Right cardiac atrium (tissue), 5 donors: ENCODE measurements at regions of chr4 and their contacts with region 1.

Region 1: GRCh38 chr4:48635310-48635709 is 144.8 kb downstream of the FRYL start:
- DNase-seq: no peak
- ATAC-seq: peak in 1 of 2 donors; percentile 29
- H3K4me3 ChIP-seq: no peak overlapping the region
- H3K27ac ChIP-seq: no peak overlapping the region
- H3K4me1 ChIP-seq: no peaks in the 10 kb centered on the region
- H3K27me3 ChIP-seq: no peaks in the 10 kb centered on the region

Region 2: GRCh38 chr4:48673537-48673936 is 38.2 kb after region 1 on chr4:
- intact Hi-C with region 1: loop called in 1 of 4 experiments (anchors 5 kb)
- DNase-seq: no peak
- ATAC-seq: no peak
- H3K4me3 ChIP-seq: no peak overlapping the region
- H3K27ac ChIP-seq: no peak overlapping the region
- H3K4me1 ChIP-seq: peaks cover 3% of the 10 kb centered on the region
- H3K27me3 ChIP-seq: no peaks in the 10 kb centered on the region